BJ (cell line): ENCODE measurements at regions of chr7 and their contacts with region 1.

Region 1: GRCh38 chr7:96075510-96076349 is 246.2 kb downstream of the SLC25A13 start:
- DNase-seq: no peak
- H3K4me3 ChIP-seq: peak overlapping the region; percentile 39
- H3K27me3 ChIP-seq: peaks cover 4% of the 10 kb centered on the region
- CTCF ChIP-seq: peak; percentile 92

Region 2: DNA sequence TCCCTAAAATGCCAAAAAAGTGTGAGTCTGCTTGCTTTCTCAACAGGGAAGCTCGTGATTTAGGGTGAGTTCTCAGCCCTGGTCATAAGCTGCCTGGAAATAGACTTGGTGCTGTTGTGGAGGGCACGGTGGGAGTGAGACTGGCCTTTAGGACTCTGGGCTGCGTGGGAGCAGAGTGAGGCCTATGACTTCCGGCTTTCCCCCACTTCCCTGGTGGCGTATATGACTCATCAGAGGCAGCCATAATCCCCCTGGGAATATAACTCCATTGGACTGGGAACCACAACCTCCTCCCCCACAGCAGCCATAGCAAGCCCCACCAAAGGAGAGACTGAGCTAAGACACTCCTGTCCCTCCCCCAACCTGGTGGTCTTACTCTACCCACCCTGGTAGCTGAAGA is 846.4 kb before region 1 on chr7:
- CTCF ChIA-PET with region 1: no interaction called
- POLR2A ChIA-PET with region 1: no interaction called
- DNase-seq: no peak
- H3K4me3 ChIP-seq: no peak overlapping the region
- H3K27me3 ChIP-seq: no peaks in the 10 kb centered on the region
- CTCF ChIP-seq: no peak

Region 3: DNA sequence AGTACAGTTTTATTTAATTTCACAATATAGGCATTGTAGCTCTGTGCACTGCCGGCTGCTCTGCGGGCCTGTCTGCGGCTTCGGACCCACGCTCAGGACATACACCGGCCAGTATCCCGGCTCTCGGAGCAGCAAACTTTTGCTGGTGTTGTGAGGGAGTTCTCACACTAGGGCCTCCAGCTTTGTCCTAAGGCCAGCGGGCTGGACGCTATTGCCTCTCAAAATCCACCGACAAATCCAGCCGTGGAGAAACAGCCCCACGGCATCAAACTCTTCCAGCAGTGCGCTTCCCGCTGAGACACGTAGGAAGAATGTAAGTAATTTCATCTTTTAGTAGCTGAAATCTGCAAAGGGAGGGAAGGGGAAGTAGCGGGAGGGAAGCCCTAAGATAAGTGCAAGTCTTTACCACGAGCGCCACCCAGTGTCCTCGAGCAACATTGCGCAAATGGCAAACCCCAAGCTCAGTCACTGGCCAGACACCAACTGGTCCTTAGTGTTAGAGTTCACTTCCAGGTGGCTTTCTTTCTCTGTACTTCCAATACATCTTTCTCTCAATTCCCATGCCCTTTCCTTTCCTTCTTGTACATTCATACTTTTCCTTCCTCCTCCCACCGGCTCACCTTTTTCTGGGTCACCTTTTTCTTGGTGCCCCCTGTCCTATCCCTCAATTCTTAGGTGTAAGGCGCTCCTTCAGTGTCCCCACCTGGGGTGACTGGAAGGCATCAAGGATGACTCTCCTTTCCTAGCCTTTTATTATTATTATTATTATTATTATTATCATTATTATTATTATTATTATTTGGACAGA is 951.9 kb after region 1 on chr7:
- CTCF ChIA-PET with region 1: interaction called, 27 read pairs
- POLR2A ChIA-PET with region 1: no interaction called
- DNase-seq: peak; percentile 37
- H3K4me3 ChIP-seq: peak overlapping the region; percentile 12; the same call in 1 of the 2 replicates
- H3K27me3 ChIP-seq: peaks cover 31% of the 10 kb centered on the region
- CTCF ChIP-seq: peak; percentile 87